ENCODE measurements at regions of chr4 and their contacts with region 1.

Region 1: DNA sequence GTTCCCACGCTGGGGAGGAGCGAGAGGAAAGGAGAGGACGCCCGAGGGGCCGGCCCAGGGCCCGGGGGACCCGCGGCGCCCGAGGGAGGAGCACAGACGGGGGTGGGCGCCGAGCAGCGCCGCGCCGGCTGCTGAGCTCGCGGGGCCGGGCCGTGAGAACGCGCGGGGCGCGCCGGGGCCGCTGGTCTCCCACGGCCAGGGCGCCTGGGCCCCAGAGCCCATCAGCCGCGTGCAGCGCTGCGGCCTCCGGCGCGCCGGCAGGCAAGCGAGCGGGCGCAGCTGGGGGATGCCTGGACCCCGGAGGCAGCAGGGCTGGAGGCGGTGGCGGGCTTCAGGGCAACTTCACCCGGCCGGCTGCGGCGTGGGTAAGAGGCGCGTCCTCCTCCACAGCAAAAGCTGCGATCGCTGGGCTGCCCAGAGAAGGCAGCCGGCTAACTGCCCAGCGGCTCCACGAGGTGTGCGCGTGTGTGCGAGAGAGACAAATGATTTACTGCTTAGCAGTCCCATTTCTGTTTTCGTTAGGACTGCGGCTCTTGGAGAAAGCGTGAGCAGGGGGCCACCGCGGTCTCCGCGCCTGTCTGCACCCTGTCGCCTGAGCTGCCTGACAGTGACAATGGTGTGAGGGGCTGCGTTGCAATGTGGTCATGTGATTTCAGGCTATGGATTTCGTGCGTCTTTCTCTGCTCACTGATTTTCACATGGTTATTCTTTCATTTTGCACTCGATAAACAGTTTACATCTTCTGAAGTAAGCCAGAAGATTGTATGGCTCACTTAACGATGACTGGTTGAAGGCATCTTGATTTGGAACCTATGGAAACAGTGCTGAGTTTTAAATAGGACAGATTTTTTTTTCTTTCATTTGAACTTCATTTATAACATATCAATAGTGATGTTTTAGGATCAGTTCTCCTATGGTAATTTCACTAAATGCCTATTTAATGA is 1.2 kb downstream of the GUCY1A1 start:
- DNase-seq: peak; percentile 76
- ATAC-seq: peak; percentile 85

Region 2: DNA sequence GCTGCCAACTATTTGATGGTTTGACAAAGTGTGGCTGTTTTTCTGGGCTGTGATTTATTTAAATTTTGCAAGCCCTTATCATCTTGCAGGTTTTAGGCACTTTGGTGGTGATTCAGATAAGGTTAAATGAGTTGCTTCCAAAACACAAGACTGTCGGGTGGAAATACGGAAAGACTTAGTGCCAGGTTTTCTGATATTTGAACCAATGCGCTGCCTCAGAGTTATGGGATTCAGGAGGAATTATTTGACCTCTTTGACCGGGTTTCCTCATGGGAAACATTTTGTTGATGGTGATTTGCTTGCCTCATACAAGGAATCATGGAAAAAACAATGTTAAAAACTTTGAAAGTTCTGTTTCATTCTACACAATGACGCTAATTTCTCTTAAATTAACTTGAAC is 155.0 kb before region 1 on chr4:
- intact Hi-C with region 1: loop called (anchors 2 kb)
- DNase-seq: no peak
- ATAC-seq: peak; percentile 69

Region 3: DNA sequence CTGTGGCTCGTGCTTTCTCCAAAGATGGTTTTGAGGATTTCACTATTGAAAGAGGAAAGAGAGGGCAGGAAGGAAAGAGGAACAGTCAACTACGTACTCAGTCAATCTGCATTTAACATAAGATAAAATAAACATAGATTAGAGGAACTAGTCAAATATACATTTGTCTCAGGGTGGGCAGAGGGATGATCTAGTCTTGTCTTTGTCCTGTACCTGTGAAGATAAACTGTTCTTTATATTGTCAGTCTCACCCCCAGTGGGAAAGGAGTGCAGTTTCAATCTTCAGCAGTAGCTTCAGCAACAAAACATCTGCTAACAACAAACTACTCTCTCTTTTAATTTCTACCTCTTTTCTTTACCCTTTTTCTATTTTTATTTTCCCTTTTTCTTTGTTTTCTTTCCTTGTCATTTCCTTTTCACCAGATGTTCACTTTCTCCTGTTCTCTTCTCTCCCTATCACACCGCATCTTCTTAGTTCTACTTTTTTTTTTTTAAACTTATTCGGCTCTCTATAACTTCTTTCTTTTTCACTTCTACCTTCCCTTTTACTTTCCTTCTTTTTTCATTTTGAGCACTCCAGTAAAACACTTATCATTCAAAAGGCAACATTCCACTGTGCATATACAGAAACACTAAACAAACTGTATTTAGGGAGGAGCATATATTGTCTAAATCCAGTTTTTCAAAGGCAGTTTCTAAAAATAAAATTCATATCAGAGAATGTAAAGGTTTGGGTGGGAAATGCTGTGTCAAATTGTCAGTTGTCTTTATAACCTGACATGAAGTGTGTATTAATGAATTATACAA is 52.6 kb before region 1 on chr4:
- intact Hi-C with region 1: loop called (anchors 5 kb)
- DNase-seq: no peak
- ATAC-seq: no peak

Region 4: DNA sequence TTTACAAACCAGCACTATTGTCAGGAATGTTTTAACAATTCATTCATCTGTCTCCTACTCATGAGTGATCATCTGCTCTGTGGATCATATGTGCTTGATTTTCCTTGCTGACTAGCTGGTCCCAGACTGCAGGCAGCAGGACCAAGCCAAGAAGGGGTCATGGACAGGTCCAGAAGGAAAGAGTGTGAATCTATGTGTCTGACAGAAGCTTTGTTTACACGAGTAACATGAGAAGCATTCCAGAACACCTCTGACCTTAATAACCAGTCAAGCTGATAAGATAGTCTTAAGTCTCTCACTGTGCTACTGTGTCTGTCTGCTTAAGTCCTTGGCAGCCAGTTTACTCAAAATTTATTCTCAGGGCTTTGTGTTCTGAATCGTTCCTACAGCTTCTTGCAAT is 37.8 kb after region 1 on chr4:
- intact Hi-C with region 1: loop called (anchors 5 kb)
- DNase-seq: no peak
- ATAC-seq: peak; percentile 88

Region 5: GRCh38 chr4:155774033-155774432 is 106.2 kb after region 1 on chr4:
- intact Hi-C with region 1: loop called (anchors 2 kb)
- DNase-seq: no peak
- ATAC-seq: peak; percentile 94